Left colon (tissue), 2 donors: ENCODE measurements at regions of chr1 and their contacts with region 1.

Region 1: GRCh38 chr1:212782422-212783154 is 9.0 kb downstream of the NSL1 start:
- DNase-seq: no peak
- ATAC-seq: peak; percentile 63

Region 2: DNA sequence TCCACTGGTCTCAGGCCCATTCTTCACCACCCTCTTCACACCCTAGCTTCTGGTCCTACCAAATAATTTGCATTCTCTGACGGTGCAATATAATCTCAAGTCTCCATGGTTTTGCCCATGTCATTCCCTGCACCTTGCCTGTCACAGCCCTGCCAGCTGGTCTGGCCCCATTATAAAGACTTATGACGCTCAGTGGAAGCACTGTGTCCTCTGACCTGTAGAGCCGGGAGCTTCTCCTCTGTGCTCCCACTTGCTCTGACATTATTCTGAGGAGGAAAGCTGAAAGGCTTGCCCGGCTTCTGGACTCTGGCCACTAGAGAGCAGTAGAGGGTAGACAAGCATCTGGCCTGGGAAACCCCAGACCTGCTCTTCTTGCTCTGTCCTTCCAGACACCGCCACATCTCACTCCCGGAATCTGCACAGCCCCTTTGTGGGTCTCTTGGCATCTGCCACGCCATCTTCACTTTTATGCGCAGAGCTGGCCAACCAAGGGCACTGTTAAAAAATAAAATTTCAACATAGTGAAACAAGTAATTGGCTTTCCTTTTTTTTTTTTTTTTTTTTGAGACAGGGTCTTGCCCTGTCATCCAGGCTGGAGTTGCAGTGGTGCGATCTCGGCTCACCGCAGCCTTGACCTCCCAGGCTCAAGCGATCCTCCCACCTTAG is 305.4 kb before region 1 on chr1:
- intact Hi-C with region 1: loop called in 1 of 2 experiments (anchors 10 kb)
- DNase-seq: peak; percentile 83 to 85
- ATAC-seq: peak; percentile 86

Region 3: DNA sequence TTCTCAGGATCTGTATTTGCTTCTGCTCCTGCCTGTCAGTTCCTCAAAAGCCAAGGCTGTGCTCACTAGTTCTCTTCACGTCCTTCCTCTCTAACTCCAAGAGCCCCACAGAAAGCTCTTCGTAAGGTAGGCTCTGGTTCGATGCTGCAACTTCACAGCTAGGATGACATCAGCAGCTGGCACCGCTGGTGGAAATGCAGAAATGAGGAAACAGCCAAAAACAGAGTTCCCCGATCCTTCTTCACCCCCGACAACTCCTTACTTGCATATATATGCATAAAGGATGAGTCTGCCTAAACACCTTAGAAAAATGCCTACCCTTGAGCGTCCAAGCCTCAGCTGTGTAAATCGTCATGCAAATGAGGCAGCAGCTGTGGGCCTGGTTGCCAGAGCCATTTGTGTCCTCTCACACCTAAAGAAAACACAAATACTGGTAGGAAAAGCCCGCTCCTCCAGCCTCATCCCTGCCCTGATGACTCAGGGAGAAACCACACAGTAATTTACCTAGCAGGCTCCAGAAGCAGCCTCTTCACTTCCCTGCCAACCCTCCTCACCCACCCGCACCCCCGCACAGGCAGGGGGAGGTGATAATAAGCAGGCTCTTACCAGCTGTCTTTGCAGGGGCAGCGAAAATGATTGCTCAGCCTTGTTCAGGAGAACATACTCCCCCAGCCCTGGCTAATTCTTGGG is 111.1 kb before region 1 on chr1:
- intact Hi-C with region 1: loop called in 1 of 2 experiments (anchors 10 kb)
- DNase-seq: no peak
- ATAC-seq: no peak

Region 4: GRCh38 chr1:212760126-212760823 is 22.3 kb before region 1 on chr1:
- intact Hi-C with region 1: no loop called
- DNase-seq: peak in 1 of 2 donors; percentile 36
- ATAC-seq: peak; percentile 40

Region 5: GRCh38 chr1:212959266-212960220 is 177.0 kb after region 1 on chr1:
- intact Hi-C with region 1: no loop called
- DNase-seq: no peak
- ATAC-seq: no peak